Activated CD4-positive, alpha-beta memory T cell treated with anti-CD3 and anti-CD28 coated beads for 36 hours (primary cell): ENCODE measurements at regions of chr16 and their contacts with region 1.

Region 1: GRCh38 chr16:31868691-31869167 is 4.9 kb upstream of the ZNF267 start:
- DNase-seq: peak; percentile 87
- H3K4me3 Mint-ChIP-seq: peak overlapping the region; percentile 59
- H3K27ac Mint-ChIP-seq: peak overlapping the region; percentile 96
- H3K4me1 Mint-ChIP-seq: peaks cover 51% of the 10 kb centered on the region
- H3K27me3 Mint-ChIP-seq: no peaks in the 10 kb centered on the region

Region 2: GRCh38 chr16:30984669-30985400 is 883.9 kb before region 1 on chr16 and contains the start of gene HSD3B7:
- CTCF ChIA-PET with region 1: interaction called, 26 read pairs
- POLR2A ChIA-PET with region 1: no interaction called
- intact Hi-C with region 1: loop called (anchors 10 kb)
- DNase-seq: peak; percentile 88
- H3K4me3 Mint-ChIP-seq: no peak within 1 kb of the TSS
- H3K27ac Mint-ChIP-seq: no peak within 1 kb of the TSS
- H3K4me1 Mint-ChIP-seq: no peaks in the 10 kb centered on the region
- H3K27me3 Mint-ChIP-seq: no peaks in the 10 kb centered on the region
- total RNA-seq, gene HSD3B7: 2.2 TPM

Region 3: GRCh38 chr16:31073968-31074813 is 794.5 kb before region 1 on chr16 and contains the starts of genes ZNF646 and ZNF668:
- CTCF ChIA-PET with region 1: no interaction called
- POLR2A ChIA-PET with region 1: interaction called, 3 read pairs
- intact Hi-C with region 1: loop called (anchors 2 kb)
- DNase-seq: peak; percentile 99
- H3K4me3 Mint-ChIP-seq: peak within 1 kb of the TSS; percentile 98
- H3K27ac Mint-ChIP-seq: peak within 1 kb of the TSS; percentile 97
- H3K4me1 Mint-ChIP-seq: peaks cover 30% of the 10 kb centered on the region
- H3K27me3 Mint-ChIP-seq: no peaks in the 10 kb centered on the region
- total RNA-seq, gene ZNF646: 18.6 to 19.9 TPM
- total RNA-seq, gene ZNF668: 11.4 to 13.3 TPM

Region 4: DNA sequence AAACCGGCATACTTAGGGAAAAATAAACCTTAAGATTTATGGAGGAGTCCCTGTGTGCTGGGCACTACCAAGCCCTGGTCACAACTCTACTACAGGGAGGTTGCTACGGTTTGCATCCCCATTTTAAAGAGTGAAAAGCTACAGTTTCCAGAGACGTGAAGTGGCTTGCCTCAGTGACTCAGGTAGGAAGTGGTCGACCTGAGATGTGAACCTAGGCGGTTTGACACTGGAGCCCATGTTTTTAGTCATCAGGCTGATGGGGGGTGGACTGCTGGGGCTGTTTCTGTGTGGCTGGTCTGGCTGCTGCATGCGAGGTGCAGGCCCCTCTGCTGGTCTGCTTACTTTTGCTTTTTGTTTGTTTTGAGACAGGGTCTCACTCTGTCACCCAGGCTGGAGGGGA is 447.1 kb before region 1 on chr16:
- CTCF ChIA-PET with region 1: no interaction called
- POLR2A ChIA-PET with region 1: no interaction called
- intact Hi-C with region 1: loop called (anchors 1 kb)
- DNase-seq: peak; percentile 87
- H3K4me3 Mint-ChIP-seq: no peak overlapping the region
- H3K27ac Mint-ChIP-seq: no peak overlapping the region
- H3K4me1 Mint-ChIP-seq: peaks cover 25% of the 10 kb centered on the region
- H3K27me3 Mint-ChIP-seq: peaks cover 11% of the 10 kb centered on the region

Region 5: GRCh38 chr16:31507929-31508705 is 360.6 kb before region 1 on chr16 and contains the start of gene RUSF1:
- CTCF ChIA-PET with region 1: interaction called, 3 read pairs
- POLR2A ChIA-PET with region 1: interaction called, 7 read pairs
- intact Hi-C with region 1: loop called (anchors 2 kb)
- DNase-seq: peak; percentile 92
- H3K4me3 Mint-ChIP-seq: peak within 1 kb of the TSS; percentile 93
- H3K27ac Mint-ChIP-seq: peak within 1 kb of the TSS; percentile 94
- H3K4me1 Mint-ChIP-seq: peaks cover 44% of the 10 kb centered on the region
- H3K27me3 Mint-ChIP-seq: no peaks in the 10 kb centered on the region
- total RNA-seq, gene RUSF1: 40.9 to 41.2 TPM

Region 6: GRCh38 chr16:31713071-31713944 is 155.4 kb before region 1 on chr16:
- CTCF ChIA-PET with region 1: interaction called, 7 read pairs
- POLR2A ChIA-PET with region 1: interaction called, 11 read pairs
- intact Hi-C with region 1: loop called (anchors 2 kb)
- DNase-seq: peak; percentile 95
- H3K4me3 Mint-ChIP-seq: peak overlapping the region; percentile 99
- H3K27ac Mint-ChIP-seq: peak overlapping the region; percentile 98
- H3K4me1 Mint-ChIP-seq: peaks cover 43% of the 10 kb centered on the region
- H3K27me3 Mint-ChIP-seq: no peaks in the 10 kb centered on the region

Region 7: DNA sequence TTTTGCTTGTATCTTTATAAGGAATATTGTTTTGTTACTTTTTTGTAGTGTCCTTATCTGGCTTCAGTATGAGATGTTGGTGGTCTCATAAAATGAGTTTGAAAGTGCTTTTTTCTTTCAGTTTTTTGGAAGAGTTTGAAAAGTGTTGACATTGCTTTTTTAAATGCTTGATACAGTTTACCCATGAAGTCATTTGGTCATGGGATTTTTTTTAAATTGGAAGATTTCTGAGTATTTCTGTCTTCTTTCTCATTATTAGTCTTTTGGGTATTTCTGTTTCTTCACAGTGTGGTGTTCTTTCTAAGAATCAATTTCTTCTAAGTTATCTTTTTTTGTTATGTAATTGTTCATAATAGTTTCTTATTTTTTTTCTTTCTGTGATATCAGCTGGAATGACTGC is 20.0 kb after region 1 on chr16:
- CTCF ChIA-PET with region 1: interaction called, 7 read pairs
- POLR2A ChIA-PET with region 1: interaction called, 8 read pairs
- intact Hi-C with region 1: loop called (anchors 1 kb)
- DNase-seq: no peak
- H3K4me3 Mint-ChIP-seq: peak overlapping the region; percentile 31
- H3K27ac Mint-ChIP-seq: peak overlapping the region; percentile 91
- H3K4me1 Mint-ChIP-seq: peaks cover 81% of the 10 kb centered on the region
- H3K27me3 Mint-ChIP-seq: no peaks in the 10 kb centered on the region